Calu3 (cell line): ENCODE measurements at regions of chr7 and their contacts with region 1.

Region 1: GRCh38 chr7:105652359-105652993 is 71.2 kb upstream of the EFCAB10 start:
- DNase-seq: peak; percentile 86
- H3K4me3 Mint-ChIP-seq: no peak overlapping the region
- H3K27ac Mint-ChIP-seq: no peak overlapping the region
- H3K4me1 Mint-ChIP-seq: peaks cover 30% of the 10 kb centered on the region
- H3K27me3 Mint-ChIP-seq: no peaks in the 10 kb centered on the region
- CTCF ChIP-seq: peak; percentile 75

Region 2: GRCh38 chr7:104679085-104679484 is 973.4 kb before region 1 on chr7:
- CTCF ChIA-PET with region 1: no interaction called
- intact Hi-C with region 1: no loop called
- DNase-seq: no peak
- H3K4me3 Mint-ChIP-seq: no peak overlapping the region
- H3K27ac Mint-ChIP-seq: no peak overlapping the region
- H3K4me1 Mint-ChIP-seq: no peaks in the 10 kb centered on the region
- H3K27me3 Mint-ChIP-seq: peaks cover 42% of the 10 kb centered on the region
- CTCF ChIP-seq: no peak

Region 3: GRCh38 chr7:105759670-105760550 is 107.4 kb after region 1 on chr7:
- CTCF ChIA-PET with region 1: no interaction called
- intact Hi-C with region 1: loop called (anchors 5 kb)
- DNase-seq: peak; percentile 56
- H3K4me3 Mint-ChIP-seq: no peak overlapping the region
- H3K27ac Mint-ChIP-seq: no peak overlapping the region
- H3K4me1 Mint-ChIP-seq: no peaks in the 10 kb centered on the region
- H3K27me3 Mint-ChIP-seq: no peaks in the 10 kb centered on the region
- CTCF ChIP-seq: peak; percentile 57

Region 4: GRCh38 chr7:105876091-105876963 is 223.9 kb after region 1 on chr7 and contains the start of gene ATXN7L1:
- CTCF ChIA-PET with region 1: no interaction called
- intact Hi-C with region 1: loop called (anchors 10 kb)
- DNase-seq: peak; percentile 96
- H3K4me3 Mint-ChIP-seq: peak within 1 kb of the TSS; percentile 99
- H3K27ac Mint-ChIP-seq: peak within 1 kb of the TSS; percentile 99
- H3K4me1 Mint-ChIP-seq: peaks cover 16% of the 10 kb centered on the region
- H3K27me3 Mint-ChIP-seq: no peaks in the 10 kb centered on the region
- CTCF ChIP-seq: peak; percentile 64
- total RNA-seq, gene ATXN7L1: 11.7 and 12.0 TPM in 2 replicates

Region 5: GRCh38 chr7:106009403-106010226 is 357.1 kb after region 1 on chr7:
- CTCF ChIA-PET with region 1: no interaction called
- intact Hi-C with region 1: loop called (anchors 10 kb)
- DNase-seq: peak; percentile 86
- H3K4me3 Mint-ChIP-seq: peak overlapping the region; percentile 36
- H3K27ac Mint-ChIP-seq: no peak overlapping the region
- H3K4me1 Mint-ChIP-seq: no peaks in the 10 kb centered on the region
- H3K27me3 Mint-ChIP-seq: peaks cover 67% of the 10 kb centered on the region
- CTCF ChIP-seq: peak; percentile 95

Region 6: DNA sequence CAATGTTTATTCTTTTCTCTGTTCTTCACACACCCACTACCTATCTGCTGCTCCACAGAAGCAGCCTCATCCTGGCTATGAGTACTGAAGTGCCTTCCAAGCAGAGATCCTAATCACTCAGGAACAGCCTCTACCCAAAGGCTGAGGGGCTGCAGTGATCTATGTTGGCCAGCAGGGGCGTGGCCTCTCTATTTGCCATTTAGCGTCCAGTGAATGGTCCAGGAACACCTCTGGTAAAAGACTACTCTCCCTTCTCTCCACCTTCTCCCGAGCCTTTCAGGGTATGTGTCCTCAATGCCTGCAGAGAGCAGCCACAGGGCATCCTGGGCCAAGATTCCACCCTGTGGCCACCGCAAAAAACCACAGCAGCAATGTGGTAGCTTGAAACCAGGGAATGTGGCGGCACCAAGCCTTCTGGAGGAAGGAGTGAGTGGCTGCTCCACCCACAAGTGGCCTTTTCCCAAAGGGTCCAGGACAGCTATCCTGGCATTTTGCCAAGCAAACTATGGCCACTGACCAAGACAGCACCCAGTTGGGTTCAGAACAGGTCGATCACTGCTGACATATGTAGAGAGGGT is 388.8 kb after region 1 on chr7:
- CTCF ChIA-PET with region 1: interaction called, 10 read pairs
- intact Hi-C with region 1: loop called (anchors 1 kb)
- DNase-seq: peak; percentile 61
- H3K4me3 Mint-ChIP-seq: no peak overlapping the region
- H3K27ac Mint-ChIP-seq: no peak overlapping the region
- H3K4me1 Mint-ChIP-seq: peaks cover 9% of the 10 kb centered on the region
- H3K27me3 Mint-ChIP-seq: peaks cover 36% of the 10 kb centered on the region
- CTCF ChIP-seq: peak; percentile 76

Region 7: GRCh38 chr7:106153891-106154449 is 501.5 kb after region 1 on chr7:
- CTCF ChIA-PET with region 1: no interaction called
- intact Hi-C with region 1: loop called (anchors 10 kb)
- DNase-seq: peak; percentile 84
- H3K4me3 Mint-ChIP-seq: no peak overlapping the region
- H3K27ac Mint-ChIP-seq: no peak overlapping the region
- H3K4me1 Mint-ChIP-seq: peaks cover 9% of the 10 kb centered on the region
- H3K27me3 Mint-ChIP-seq: peaks cover 39% of the 10 kb centered on the region
- CTCF ChIP-seq: peak; percentile 82